Activated naive CD4-positive, alpha-beta T cell treated with anti-CD3 and anti-CD28 coated beads for 36 hours (primary cell): ENCODE measurements at regions of chr1 and their contacts with region 1.

Region 1: GRCh38 chr1:39183503-39184353 is 20.8 kb upstream of the MACF1 start:
- DNase-seq: peak; percentile 94
- H3K4me3 Mint-ChIP-seq: peak overlapping the region; percentile 31
- H3K27ac Mint-ChIP-seq: peak overlapping the region; percentile 93
- H3K4me1 Mint-ChIP-seq: peaks cover 50% of the 10 kb centered on the region
- H3K27me3 Mint-ChIP-seq: no peaks in the 10 kb centered on the region

Region 2: GRCh38 chr1:39105061-39105840 is 78.5 kb before region 1 on chr1:
- CTCF ChIA-PET with region 1: interaction called, 11 read pairs
- intact Hi-C with region 1: loop called (anchors 1 kb)
- DNase-seq: peak; percentile 51
- H3K4me3 Mint-ChIP-seq: peak overlapping the region; percentile 78
- H3K27ac Mint-ChIP-seq: no peak overlapping the region
- H3K4me1 Mint-ChIP-seq: peaks cover 42% of the 10 kb centered on the region
- H3K27me3 Mint-ChIP-seq: peaks cover 8% of the 10 kb centered on the region

Region 3: GRCh38 chr1:39214998-39215873 is 31.5 kb after region 1 on chr1:
- CTCF ChIA-PET with region 1: interaction called, 9 read pairs
- intact Hi-C with region 1: loop called (anchors 5 kb)
- DNase-seq: peak; percentile 64
- H3K4me3 Mint-ChIP-seq: peak overlapping the region; percentile 89
- H3K27ac Mint-ChIP-seq: peak overlapping the region; percentile 93
- H3K4me1 Mint-ChIP-seq: peaks cover 58% of the 10 kb centered on the region
- H3K27me3 Mint-ChIP-seq: no peaks in the 10 kb centered on the region

Region 4: DNA sequence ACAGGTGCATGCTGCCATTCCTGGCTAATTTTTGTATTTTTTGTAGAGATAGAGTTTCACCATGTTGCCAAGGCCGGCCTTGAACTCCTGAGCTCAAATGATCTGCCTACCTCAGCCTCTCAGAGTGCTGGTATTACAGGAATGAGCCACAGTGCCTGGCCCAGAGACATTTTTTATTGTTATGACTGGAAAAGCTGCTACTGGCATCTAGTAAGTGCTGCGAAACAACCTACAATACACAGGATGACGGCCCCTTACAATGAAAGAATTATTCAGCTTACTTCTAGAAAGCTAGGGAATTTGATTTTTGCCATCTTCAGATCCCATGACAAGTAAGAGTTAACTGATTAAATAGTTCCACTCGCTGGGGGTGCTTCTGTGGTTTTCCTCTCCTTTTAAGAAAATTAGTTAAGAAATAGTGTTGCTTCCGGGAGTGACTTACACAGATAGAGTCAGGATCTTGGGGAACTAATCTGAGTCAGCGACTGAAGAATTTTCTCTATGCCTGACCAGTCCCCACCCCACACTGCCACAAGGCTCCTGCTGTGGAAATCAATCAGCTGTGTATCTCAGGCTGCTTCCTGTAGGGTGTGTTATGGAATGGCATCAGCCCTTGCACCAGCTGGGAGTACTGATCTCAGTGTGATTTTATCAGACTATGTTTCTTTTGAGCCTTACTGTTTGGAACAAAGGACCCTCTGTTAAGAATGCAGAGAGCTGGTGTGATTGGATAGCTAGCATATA is 214.7 kb after region 1 on chr1:
- CTCF ChIA-PET with region 1: interaction called, 3 read pairs
- intact Hi-C with region 1: loop called (anchors 2 kb)
- DNase-seq: peak; percentile 58
- H3K4me3 Mint-ChIP-seq: no peak overlapping the region
- H3K27ac Mint-ChIP-seq: peak overlapping the region; percentile 68
- H3K4me1 Mint-ChIP-seq: peaks cover 63% of the 10 kb centered on the region
- H3K27me3 Mint-ChIP-seq: no peaks in the 10 kb centered on the region

Region 5: DNA sequence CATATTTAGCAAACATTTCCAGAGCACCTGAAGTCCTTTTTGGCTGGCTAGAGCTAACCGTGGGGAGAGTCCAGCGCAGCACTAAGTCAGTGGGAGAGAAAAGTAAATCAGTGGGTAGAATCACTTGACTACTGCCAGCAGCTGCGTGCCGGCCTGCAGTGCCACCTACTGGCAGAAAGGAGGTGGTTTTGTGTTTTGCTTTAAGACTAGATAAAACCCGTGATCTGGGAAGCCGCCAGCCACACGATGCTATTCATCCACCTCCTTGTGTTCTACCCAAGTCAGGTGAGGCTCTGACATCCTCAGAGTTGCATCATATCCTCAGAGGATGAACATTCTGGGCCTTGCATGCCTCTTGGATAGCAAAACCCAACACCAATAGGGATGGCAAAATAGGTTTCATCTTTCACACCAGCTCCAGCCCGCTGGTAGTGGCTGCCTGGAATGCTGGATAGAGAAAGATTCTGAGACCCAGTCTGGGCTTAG is 469.9 kb after region 1 on chr1:
- CTCF ChIA-PET with region 1: no interaction called
- intact Hi-C with region 1: loop called (anchors 2 kb)
- DNase-seq: peak; percentile 90
- H3K4me3 Mint-ChIP-seq: no peak overlapping the region
- H3K27ac Mint-ChIP-seq: no peak overlapping the region
- H3K4me1 Mint-ChIP-seq: peaks cover 8% of the 10 kb centered on the region
- H3K27me3 Mint-ChIP-seq: peaks cover 8% of the 10 kb centered on the region